Activated B cell treated with CpG ODN at 0.5 μM for 24 hours (primary cell): ENCODE measurements at regions of chr16 and their contacts with region 1.

Region 1: GRCh38 chr16:56519459-56520250 is at the start of gene BBS2:
- DNase-seq: peak; percentile 94
- ATAC-seq: peak; percentile 92
- H3K4me3 Mint-ChIP-seq: peak within 1 kb of the TSS; percentile 87
- H3K27ac Mint-ChIP-seq: peak within 1 kb of the TSS; percentile 87
- H3K4me1 Mint-ChIP-seq: peaks cover 20% of the 10 kb centered on the region
- H3K27me3 Mint-ChIP-seq: no peaks in the 10 kb centered on the region
- CTCF ChIP-seq: no peak
- total RNA-seq, gene BBS2: 25.5 and 32.3 TPM in 2 replicates

Region 2: DNA sequence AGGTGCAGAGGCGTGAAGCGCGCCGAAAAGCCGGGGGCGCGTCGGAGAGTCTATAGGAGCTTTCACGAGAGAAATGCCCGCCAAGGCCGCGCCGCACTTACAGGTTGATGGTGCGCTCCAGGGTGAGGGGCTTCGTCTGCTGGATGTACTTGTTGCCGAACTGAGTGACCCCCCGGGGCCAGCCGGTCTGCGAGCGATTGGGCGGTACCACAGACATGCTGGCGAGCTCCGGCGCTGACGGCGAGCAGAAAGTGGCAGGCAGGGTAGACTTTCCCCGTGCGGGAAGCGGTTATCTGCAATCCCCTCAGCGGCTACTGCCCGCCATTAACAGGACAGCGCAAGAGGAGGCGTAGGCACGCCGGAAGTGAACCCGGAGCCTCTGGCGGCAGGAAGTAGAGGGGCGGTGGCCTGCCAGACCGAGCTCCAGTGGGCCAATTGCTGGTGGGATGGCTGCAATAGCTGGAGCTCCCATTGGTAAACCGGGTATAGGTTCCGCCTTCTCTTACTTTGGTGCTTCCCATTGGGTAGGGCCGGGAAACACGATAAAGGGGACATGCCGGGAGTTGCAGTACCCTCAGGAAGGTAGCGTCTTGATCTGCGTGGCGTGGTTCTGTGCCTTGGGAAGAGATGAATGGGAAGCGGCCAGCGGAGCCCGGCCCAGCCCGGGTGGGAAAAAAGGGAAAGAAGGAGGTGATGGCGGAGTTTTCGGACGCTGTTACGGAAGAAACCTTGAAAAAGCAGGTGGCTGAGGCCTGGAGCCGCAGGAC is 68.5 kb before region 1 on chr16 and contains the starts of genes NUDT21 and OGFOD1:
- CTCF ChIA-PET with region 1: no interaction called
- POLR2A ChIA-PET with region 1: interaction called, 5 read pairs
- intact Hi-C with region 1: loop called (anchors 1 kb)
- DNase-seq: peak; percentile 73
- ATAC-seq: peak; percentile 99
- H3K4me3 Mint-ChIP-seq: peak within 1 kb of the TSS; percentile 99
- H3K27ac Mint-ChIP-seq: peak within 1 kb of the TSS; percentile 97
- H3K4me1 Mint-ChIP-seq: peaks cover 41% of the 10 kb centered on the region
- H3K27me3 Mint-ChIP-seq: no peaks in the 10 kb centered on the region
- CTCF ChIP-seq: no peak
- total RNA-seq, gene NUDT21: 108 and 111 TPM in 2 replicates
- total RNA-seq, gene OGFOD1: 45.6 and 51.8 TPM in 2 replicates

Region 3: DNA sequence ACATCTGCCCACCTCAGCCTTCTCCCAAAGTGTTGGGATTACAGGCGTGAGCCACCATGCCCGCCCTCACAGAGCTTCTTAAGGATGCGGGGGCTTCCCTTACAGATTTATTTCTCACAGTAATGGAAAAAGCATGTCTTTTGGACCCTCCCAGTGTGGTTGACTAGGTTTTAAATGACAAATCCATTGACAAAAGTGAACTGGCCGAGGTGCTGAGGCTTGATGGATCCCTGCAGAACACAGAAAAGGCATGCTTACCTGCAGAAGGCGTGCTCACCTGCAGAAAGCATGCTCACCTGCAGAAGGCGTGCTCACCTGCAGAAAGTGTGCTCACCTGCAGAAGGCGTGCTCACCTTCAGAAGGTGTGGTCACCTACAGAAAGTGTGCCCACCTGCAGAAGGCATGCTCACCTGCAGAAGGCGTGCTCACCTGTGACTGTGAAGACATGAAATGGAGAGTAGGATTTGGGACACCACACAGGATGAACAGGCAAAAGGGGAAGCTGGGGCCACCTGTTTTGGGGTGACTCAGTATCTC is 15.3 kb after region 1 on chr16:
- CTCF ChIA-PET with region 1: no interaction called
- POLR2A ChIA-PET with region 1: no interaction called
- intact Hi-C with region 1: no loop called
- DNase-seq: no peak
- ATAC-seq: no peak
- H3K4me3 Mint-ChIP-seq: no peak overlapping the region
- H3K27ac Mint-ChIP-seq: no peak overlapping the region
- H3K4me1 Mint-ChIP-seq: no peaks in the 10 kb centered on the region
- H3K27me3 Mint-ChIP-seq: peaks cover 32% of the 10 kb centered on the region
- CTCF ChIP-seq: no peak

Region 4: DNA sequence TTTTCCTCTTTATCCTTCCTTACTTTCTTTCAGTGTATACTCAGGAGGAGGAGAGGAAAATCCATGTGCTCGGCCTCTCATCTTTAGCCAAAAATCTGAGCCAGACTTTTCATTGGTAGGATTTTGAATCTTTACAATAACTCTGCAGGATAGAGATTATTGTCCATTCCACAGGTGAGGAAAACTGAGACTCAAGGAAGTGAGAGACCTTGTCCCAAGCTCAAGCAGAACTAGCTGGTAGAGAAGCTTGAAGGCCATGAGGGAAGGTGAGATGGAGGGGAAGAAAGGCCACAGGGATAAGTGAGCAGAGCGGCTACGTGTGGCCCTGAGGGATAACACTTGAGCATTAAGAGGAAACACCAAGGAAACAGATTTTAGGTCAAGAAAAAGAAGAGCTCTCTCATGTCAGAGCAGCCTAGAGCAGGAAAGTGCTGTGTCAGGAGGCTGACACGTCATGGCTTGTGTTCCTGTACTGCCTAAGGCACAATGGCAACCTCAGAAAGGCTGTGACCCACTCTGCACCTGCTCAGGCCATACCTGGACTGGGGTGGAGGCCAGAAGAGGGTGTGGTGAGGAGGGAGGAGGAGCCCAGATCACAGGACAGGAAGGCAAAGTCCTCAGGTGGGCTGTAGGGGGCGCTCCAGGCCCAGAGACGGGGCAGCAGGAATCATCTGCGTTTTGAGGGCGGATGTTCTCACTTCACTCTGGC is 57.1 kb after region 1 on chr16:
- CTCF ChIA-PET with region 1: interaction called, 3 read pairs
- POLR2A ChIA-PET with region 1: no interaction called
- intact Hi-C with region 1: loop called (anchors 10 kb)
- DNase-seq: peak; percentile 67
- ATAC-seq: peak; percentile 96
- H3K4me3 Mint-ChIP-seq: no peak overlapping the region
- H3K27ac Mint-ChIP-seq: no peak overlapping the region
- H3K4me1 Mint-ChIP-seq: no peaks in the 10 kb centered on the region
- H3K27me3 Mint-ChIP-seq: peaks cover 3% of the 10 kb centered on the region
- CTCF ChIP-seq: no peak

Region 5: GRCh38 chr16:56729735-56730662 is 210.3 kb after region 1 on chr16 and contains the start of gene NUP93:
- CTCF ChIA-PET with region 1: no interaction called
- POLR2A ChIA-PET with region 1: no interaction called
- intact Hi-C with region 1: loop called (anchors 1 kb)
- DNase-seq: peak; percentile 79
- ATAC-seq: peak; percentile 89
- H3K4me3 Mint-ChIP-seq: peak within 1 kb of the TSS; percentile 90
- H3K27ac Mint-ChIP-seq: peak within 1 kb of the TSS; percentile 84
- H3K4me1 Mint-ChIP-seq: peaks cover 20% of the 10 kb centered on the region
- H3K27me3 Mint-ChIP-seq: no peaks in the 10 kb centered on the region
- CTCF ChIP-seq: no peak
- total RNA-seq, gene NUP93: 104 and 111 TPM in 2 replicates

Region 6: GRCh38 chr16:56743840-56744239 is 224.2 kb after region 1 on chr16:
- CTCF ChIA-PET with region 1: no interaction called
- POLR2A ChIA-PET with region 1: no interaction called
- intact Hi-C with region 1: no loop called
- DNase-seq: no peak
- ATAC-seq: no peak
- H3K4me3 Mint-ChIP-seq: no peak overlapping the region
- H3K27ac Mint-ChIP-seq: no peak overlapping the region
- H3K4me1 Mint-ChIP-seq: peaks cover 4% of the 10 kb centered on the region
- H3K27me3 Mint-ChIP-seq: no peaks in the 10 kb centered on the region
- CTCF ChIP-seq: no peak

Region 7: GRCh38 chr16:56789360-56789759 is 269.7 kb after region 1 on chr16:
- CTCF ChIA-PET with region 1: no interaction called
- POLR2A ChIA-PET with region 1: no interaction called
- intact Hi-C with region 1: no loop called
- DNase-seq: no peak
- ATAC-seq: no peak
- H3K4me3 Mint-ChIP-seq: no peak overlapping the region
- H3K27ac Mint-ChIP-seq: no peak overlapping the region
- H3K4me1 Mint-ChIP-seq: peaks cover 2% of the 10 kb centered on the region
- H3K27me3 Mint-ChIP-seq: no peaks in the 10 kb centered on the region
- CTCF ChIP-seq: no peak

Region 8: DNA sequence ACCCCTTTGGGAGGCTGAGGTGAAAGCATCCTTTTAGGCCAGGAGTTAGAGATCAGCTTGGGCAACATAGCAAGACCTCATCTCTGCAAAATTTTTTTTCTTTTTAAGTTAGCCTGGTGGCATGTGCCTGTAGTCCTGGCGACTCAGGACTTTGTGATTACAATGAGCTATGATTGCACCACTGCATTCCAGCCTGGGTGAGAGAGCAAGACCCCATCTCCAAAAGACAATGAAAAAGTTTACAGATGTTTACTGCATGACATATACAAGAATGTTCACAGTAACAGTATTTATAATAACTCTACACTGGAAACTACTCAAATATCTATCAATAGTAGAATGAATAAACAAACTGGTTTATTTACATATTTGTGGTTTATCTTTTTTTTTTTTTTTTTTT is 805.8 kb after region 1 on chr16:
- CTCF ChIA-PET with region 1: no interaction called
- POLR2A ChIA-PET with region 1: no interaction called
- intact Hi-C with region 1: no loop called
- DNase-seq: no peak
- ATAC-seq: no peak
- H3K4me3 Mint-ChIP-seq: no peak overlapping the region
- H3K27ac Mint-ChIP-seq: peak overlapping the region; percentile 38
- H3K4me1 Mint-ChIP-seq: peaks cover 12% of the 10 kb centered on the region
- H3K27me3 Mint-ChIP-seq: no peaks in the 10 kb centered on the region
- CTCF ChIP-seq: no peak